ENCODE measurements at regions of chr7 and their contacts with region 1.

Region 1: GRCh38 chr7:111409714-111410422 is 152.4 kb downstream of the IMMP2L start:
- DNase-seq: peak; percentile 4
- H3K4me3 ChIP-seq: no peak overlapping the region
- H3K27ac ChIP-seq: no peak overlapping the region
- H3K27me3 ChIP-seq: no peaks in the 10 kb centered on the region
- CTCF ChIP-seq: no peak

Region 2: GRCh38 chr7:111914261-111914660 is 504.4 kb after region 1 on chr7:
- CTCF ChIA-PET with region 1: no interaction called
- POLR2A ChIA-PET with region 1: interaction called, 10 read pairs
- DNase-seq: no peak
- H3K4me3 ChIP-seq: no peak overlapping the region
- H3K27ac ChIP-seq: no peak overlapping the region
- H3K27me3 ChIP-seq: no peaks in the 10 kb centered on the region
- CTCF ChIP-seq: no peak

Region 3: GRCh38 chr7:112819536-112819935 is 1409.7 kb after region 1 on chr7:
- CTCF ChIA-PET with region 1: no interaction called
- POLR2A ChIA-PET with region 1: no interaction called
- DNase-seq: no peak
- H3K4me3 ChIP-seq: no peak overlapping the region
- H3K27ac ChIP-seq: no peak overlapping the region
- H3K27me3 ChIP-seq: no peaks in the 10 kb centered on the region
- CTCF ChIP-seq: no peak

Measured in AG04450 (cell line).